CD4-positive, alpha-beta memory T cell (primary cell): ENCODE measurements at regions of chr11 and their contacts with region 1.

Region 1: DNA sequence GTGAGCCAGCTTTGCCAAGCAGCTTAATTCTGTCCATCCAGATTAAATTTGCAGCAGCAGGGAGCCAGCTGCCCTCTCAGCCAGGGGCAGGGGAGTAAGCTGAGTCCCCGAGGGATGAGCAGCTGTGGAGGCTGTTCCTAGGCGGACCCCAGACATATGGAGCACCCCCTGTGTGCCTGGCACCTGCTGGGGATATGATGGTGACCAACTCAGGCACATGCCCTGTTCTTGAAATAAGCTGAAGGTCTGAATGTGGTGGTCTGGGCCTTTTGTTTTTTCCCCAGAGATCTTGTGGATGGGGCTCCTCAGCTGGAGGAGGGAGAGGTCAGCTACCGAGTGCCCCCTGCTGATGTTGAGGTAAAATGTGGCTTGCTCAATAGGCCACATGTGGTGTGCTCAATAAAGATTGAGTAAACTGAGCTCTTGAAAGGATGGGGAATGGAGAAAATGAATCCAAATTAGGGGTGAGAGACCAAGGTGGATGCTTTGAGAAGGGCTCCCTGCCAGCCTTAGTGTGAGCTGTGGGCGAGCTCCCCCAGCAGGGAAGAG is 103.3 kb upstream of the NNMT start:
- DNase-seq: no peak
- H3K4me3 ChIP-seq: no peak overlapping the region
- H3K4me3 Mint-ChIP-seq: no peak overlapping the region
- H3K27ac ChIP-seq: no peak overlapping the region
- H3K27ac Mint-ChIP-seq: peak overlapping the region in 3 of 7 donors; percentile 34 to 94 (median 36)
- H3K4me1 ChIP-seq: peaks cover 8% of the 10 kb centered on the region
- H3K4me1 Mint-ChIP-seq: peaks cover 17 to 33% (median 21%) of the 10 kb centered on the region in 4 donors
- H3K27me3 ChIP-seq: no peaks in the 10 kb centered on the region
- H3K27me3 Mint-ChIP-seq: no peaks in the 10 kb centered on the region

Region 2: DNA sequence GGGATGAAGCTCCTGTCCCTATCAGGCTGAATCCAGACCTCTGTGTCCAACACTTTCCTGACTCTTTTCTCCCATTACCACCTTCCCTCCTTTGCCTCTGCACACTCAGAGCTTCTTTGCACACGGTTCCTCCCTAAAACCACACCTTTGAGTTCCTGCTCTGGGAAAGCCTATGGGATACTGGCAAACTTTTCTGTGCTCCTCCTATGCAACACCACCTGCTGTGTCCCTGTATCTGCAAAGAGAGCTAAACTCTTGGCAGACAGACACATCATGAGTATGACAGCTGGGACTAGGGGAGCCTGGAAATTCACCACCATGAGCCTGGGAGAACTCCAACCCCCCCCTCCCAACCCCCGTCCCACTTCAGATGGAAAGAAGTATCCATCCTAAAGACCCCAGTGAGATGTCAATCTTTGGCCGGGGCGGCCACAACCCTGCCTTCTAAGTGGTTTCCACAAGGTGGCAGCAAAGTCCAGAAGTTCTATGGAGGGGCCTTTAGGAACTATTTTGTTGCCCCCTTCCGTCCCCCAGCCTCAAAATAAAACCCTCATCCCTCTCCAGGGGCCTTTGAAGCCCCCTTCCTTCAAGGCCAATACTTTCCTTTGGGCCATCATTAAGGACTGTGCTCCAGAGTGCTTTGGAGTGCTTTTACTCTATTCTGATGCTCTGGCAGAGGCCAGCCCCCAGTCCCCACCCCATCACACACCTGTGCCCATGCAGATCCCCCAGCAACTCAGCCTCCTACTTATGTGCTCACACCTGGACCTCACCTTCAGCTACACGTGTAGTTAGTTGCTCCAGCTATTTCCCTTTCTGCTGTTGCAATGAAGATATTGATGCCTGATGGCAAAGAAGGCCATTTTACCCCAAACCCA is 198.6 kb before region 1 on chr11:
- CTCF ChIA-PET with region 1: interaction called, 7 read pairs
- POLR2A ChIA-PET with region 1: interaction called, 3 read pairs
- intact Hi-C with region 1: loop called (anchors 5 kb)
- DNase-seq: peak in 4 of 5 donors; percentile 18 to 33 (median 22)
- H3K4me3 ChIP-seq: no peak overlapping the region
- H3K4me3 Mint-ChIP-seq: no peak overlapping the region
- H3K27ac ChIP-seq: no peak overlapping the region
- H3K27ac Mint-ChIP-seq: no peak overlapping the region
- H3K4me1 ChIP-seq: no peaks in the 10 kb centered on the region
- H3K4me1 Mint-ChIP-seq: peaks cover 0 to 1% (median 0%) of the 10 kb centered on the region in 4 donors
- H3K27me3 ChIP-seq: no peaks in the 10 kb centered on the region
- H3K27me3 Mint-ChIP-seq: peaks cover 6 to 13% of the 10 kb centered on the region in 2 donors

Region 3: GRCh38 chr11:114036156-114036811 is 156.6 kb before region 1 on chr11:
- CTCF ChIA-PET with region 1: interaction called, 61 read pairs
- POLR2A ChIA-PET with region 1: no interaction called
- intact Hi-C with region 1: loop called (anchors 1 kb)
- DNase-seq: peak in 4 of 5 donors; percentile 51 to 54 (median 52)
- H3K4me3 ChIP-seq: no peak overlapping the region
- H3K4me3 Mint-ChIP-seq: peak overlapping the region in 5 of 8 donors; percentile 7 to 54 (median 28)
- H3K27ac ChIP-seq: no peak overlapping the region
- H3K27ac Mint-ChIP-seq: no peak overlapping the region
- H3K4me1 ChIP-seq: peaks cover 6% of the 10 kb centered on the region
- H3K4me1 Mint-ChIP-seq: peaks cover 0 to 9% (median 6%) of the 10 kb centered on the region in 4 donors
- H3K27me3 ChIP-seq: no peaks in the 10 kb centered on the region
- H3K27me3 Mint-ChIP-seq: no peaks in the 10 kb centered on the region

Region 4: GRCh38 chr11:114059278-114059983 is 133.5 kb before region 1 on chr11 and contains the start of gene ZBTB16:
- CTCF ChIA-PET with region 1: interaction called, 18 read pairs
- POLR2A ChIA-PET with region 1: interaction called, 8 read pairs
- intact Hi-C with region 1: loop called (anchors 1 kb)
- DNase-seq: peak; percentile 59 to 76 (median 67)
- H3K4me3 ChIP-seq: peak within 1 kb of the TSS; percentile 52 to 57
- H3K4me3 Mint-ChIP-seq: peak within 1 kb of the TSS; percentile 87 to 97 (median 92)
- H3K27ac ChIP-seq: peak within 1 kb of the TSS; percentile 43
- H3K27ac Mint-ChIP-seq: peak within 1 kb of the TSS; percentile 55 to 91 (median 85)
- H3K4me1 ChIP-seq: peaks cover 17% of the 10 kb centered on the region
- H3K4me1 Mint-ChIP-seq: peaks cover 5 to 34% (median 16%) of the 10 kb centered on the region in 4 donors
- H3K27me3 ChIP-seq: peaks cover 16% of the 10 kb centered on the region
- H3K27me3 Mint-ChIP-seq: peaks cover 1 to 8% of the 10 kb centered on the region in 2 donors
- total RNA-seq, gene ZBTB16: 5.6 to 8.2 TPM

Region 5: DNA sequence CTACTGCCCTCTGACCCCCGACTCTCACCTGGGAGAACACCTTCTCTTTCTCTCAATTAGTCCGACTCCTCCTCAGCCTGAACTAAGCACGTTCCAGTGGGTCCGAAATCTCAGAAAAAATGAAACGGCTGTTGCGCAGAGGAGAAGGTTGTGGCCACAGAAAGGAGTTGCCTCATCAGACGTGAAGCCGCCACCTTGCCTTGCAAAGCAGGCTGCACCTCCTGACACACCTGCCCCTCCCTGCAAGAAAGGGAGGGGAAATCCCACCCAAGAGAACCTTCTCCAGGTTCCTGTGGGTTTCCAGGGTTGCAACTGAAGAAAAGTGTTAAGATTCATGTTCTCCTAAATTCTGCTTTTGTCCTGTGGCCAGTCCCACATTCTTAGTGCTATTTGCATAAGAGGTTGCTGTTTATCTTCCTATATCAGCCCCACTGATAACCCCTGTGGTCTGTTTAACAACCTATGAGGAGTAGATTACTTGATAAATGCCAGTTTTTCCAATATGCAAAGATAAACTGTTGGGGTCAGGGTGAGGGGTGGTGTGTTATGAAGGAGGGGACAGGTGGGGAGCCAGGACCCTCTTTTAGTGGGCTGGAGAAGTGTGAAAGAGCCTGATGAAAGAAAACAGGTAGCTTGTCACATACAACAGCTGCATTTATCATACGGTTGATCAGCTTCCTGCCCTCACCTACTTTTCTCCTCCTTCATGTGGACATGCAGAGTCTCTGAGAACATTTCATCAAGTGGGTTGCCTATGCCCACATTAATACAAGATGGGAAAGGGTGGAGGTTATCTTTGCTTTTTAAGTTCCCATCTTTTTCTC is 115.2 kb before region 1 on chr11:
- CTCF ChIA-PET with region 1: no interaction called
- POLR2A ChIA-PET with region 1: no interaction called
- intact Hi-C with region 1: no loop called
- DNase-seq: peak in 4 of 5 donors; percentile 27 to 74 (median 46)
- H3K4me3 ChIP-seq: no peak overlapping the region
- H3K4me3 Mint-ChIP-seq: peak overlapping the region; percentile 72 to 90 (median 85)
- H3K27ac ChIP-seq: peak overlapping the region; percentile 55
- H3K27ac Mint-ChIP-seq: peak overlapping the region; percentile 84 to 99 (median 94)
- H3K4me1 ChIP-seq: peaks cover 75% of the 10 kb centered on the region
- H3K4me1 Mint-ChIP-seq: peaks cover 58 to 90% (median 74%) of the 10 kb centered on the region in 4 donors
- H3K27me3 ChIP-seq: no peaks in the 10 kb centered on the region
- H3K27me3 Mint-ChIP-seq: no peaks in the 10 kb centered on the region

Region 6: DNA sequence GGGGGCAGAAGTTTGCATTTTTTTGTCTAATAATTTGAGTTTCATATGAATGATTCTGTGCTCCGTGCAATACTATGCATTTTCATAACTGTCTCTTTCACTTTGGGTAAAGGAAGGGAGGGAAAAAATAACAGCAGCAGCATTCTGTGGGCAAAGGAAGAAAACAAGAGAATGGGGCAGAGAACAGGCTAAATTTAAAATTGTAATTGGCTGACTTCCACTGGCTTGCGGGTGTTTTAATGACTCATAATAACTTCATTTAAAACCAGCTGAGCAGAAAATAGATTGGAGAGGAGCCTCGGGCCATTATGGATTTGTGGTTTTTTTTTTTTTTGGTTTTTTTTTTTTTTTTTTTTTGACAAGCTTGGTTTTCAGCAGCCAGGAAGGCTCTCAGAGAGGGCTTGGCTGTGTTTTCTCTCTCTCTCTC is 26.0 kb before region 1 on chr11:
- CTCF ChIA-PET with region 1: interaction called, 106 read pairs
- POLR2A ChIA-PET with region 1: interaction called, 222 read pairs
- intact Hi-C with region 1: no loop called
- DNase-seq: peak; percentile 47 to 68 (median 64)
- H3K4me3 ChIP-seq: no peak overlapping the region
- H3K4me3 Mint-ChIP-seq: peak overlapping the region; percentile 21 to 83 (median 66)
- H3K27ac ChIP-seq: no peak overlapping the region
- H3K27ac Mint-ChIP-seq: peak overlapping the region; percentile 15 to 92 (median 81)
- H3K4me1 ChIP-seq: peaks cover 86% of the 10 kb centered on the region
- H3K4me1 Mint-ChIP-seq: peaks cover 57 to 100% (median 85%) of the 10 kb centered on the region in 4 donors
- H3K27me3 ChIP-seq: no peaks in the 10 kb centered on the region
- H3K27me3 Mint-ChIP-seq: no peaks in the 10 kb centered on the region

Region 7: DNA sequence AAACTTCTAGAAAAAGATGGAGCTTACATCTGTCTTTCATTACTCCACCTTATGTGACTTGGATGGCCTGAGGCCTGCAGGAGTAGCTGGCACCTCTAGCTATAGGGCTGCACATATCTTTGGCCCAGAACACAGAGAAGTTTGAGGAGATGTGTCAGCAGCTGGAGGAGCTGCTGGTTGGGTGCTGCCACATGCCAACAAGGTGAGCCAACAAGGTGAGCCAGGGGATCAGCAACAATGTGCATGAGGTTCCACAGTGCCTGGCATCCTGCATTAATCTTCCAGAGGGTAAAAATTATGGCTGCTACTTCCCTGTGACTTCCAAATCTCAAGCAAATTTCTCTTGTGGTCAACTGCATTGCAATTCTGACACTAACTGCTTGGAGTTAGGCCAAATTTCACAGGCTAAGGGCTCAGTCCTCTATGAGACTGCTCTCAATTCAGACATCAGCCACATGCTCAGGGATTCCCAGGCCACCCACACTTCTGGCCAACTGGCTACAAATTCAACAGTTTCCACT is 223.6 kb after region 1 on chr11:
- CTCF ChIA-PET with region 1: no interaction called
- POLR2A ChIA-PET with region 1: no interaction called
- intact Hi-C with region 1: no loop called
- DNase-seq: no peak
- H3K4me3 ChIP-seq: no peak overlapping the region
- H3K4me3 Mint-ChIP-seq: no peak overlapping the region
- H3K27ac ChIP-seq: no peak overlapping the region
- H3K27ac Mint-ChIP-seq: peak overlapping the region in 1 of 7 donors; percentile 30
- H3K4me1 ChIP-seq: no peaks in the 10 kb centered on the region
- H3K4me1 Mint-ChIP-seq: peaks cover 0 to 1% (median 0%) of the 10 kb centered on the region in 4 donors
- H3K27me3 ChIP-seq: no peaks in the 10 kb centered on the region
- H3K27me3 Mint-ChIP-seq: no peaks in the 10 kb centered on the region

Region 8: DNA sequence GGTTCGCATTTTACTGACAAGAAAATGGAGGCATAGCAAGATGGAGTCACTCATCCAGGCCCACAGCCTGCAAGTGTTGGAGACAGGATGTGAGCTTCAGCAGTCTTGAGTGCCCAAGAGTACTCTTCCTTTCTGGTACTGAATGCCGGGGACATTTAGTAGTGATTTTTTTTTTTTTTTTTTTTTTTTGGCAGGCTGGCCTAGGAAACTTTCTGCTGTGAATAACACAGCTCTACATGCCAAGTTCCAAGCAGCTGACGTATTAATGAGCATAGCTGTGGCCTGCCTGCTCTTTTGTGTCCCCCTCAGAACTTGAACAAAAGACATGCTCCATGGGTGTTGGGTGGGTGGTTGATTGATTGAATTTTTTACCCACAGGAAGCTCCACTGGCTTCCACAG is 1506.8 kb after region 1 on chr11:
- CTCF ChIA-PET with region 1: no interaction called
- POLR2A ChIA-PET with region 1: no interaction called
- intact Hi-C with region 1: no loop called
- DNase-seq: no peak
- H3K4me3 ChIP-seq: no peak overlapping the region
- H3K4me3 Mint-ChIP-seq: no peak overlapping the region
- H3K27ac ChIP-seq: no peak overlapping the region
- H3K27ac Mint-ChIP-seq: no peak overlapping the region
- H3K4me1 ChIP-seq: no peaks in the 10 kb centered on the region
- H3K4me1 Mint-ChIP-seq: no peaks in the 10 kb centered on the region
- H3K27me3 ChIP-seq: no peaks in the 10 kb centered on the region
- H3K27me3 Mint-ChIP-seq: peaks cover 0 to 2% of the 10 kb centered on the region in 2 donors